ENCODE measurements at regions of chr12 and their contacts with region 1.

Region 1: GRCh38 chr12:77010691-77011548 is 54.4 kb downstream of the E2F7 start:
- DNase-seq: peak; percentile 52 to 86 (median 60)
- ATAC-seq: peak in 3 of 4 donors; percentile 69 to 84 (median 71)
- H3K4me3 ChIP-seq: peak overlapping the region in 2 of 12 donors; percentile 5 to 36
- H3K27ac ChIP-seq: no peak overlapping the region
- H3K4me1 ChIP-seq: peaks cover 0 to 5% (median 0%) of the 10 kb centered on the region in 12 donors
- H3K27me3 ChIP-seq: no peaks in the 10 kb centered on the region
- CTCF ChIP-seq: peak; percentile 87 to 97 (median 94)
- POLR2A ChIP-seq: no peak

Region 2: GRCh38 chr12:76621582-76622024 is 389.3 kb before region 1 on chr12:
- intact Hi-C with region 1: loop called (anchors 1 to 5 kb)
- DNase-seq: peak in 4 of 5 donors; percentile 48 to 62 (median 57)
- ATAC-seq: peak in 3 of 4 donors; percentile 75 to 84 (median 83)
- H3K4me3 ChIP-seq: no peak overlapping the region
- H3K27ac ChIP-seq: no peak overlapping the region
- H3K4me1 ChIP-seq: peaks cover 0 to 7% (median 4%) of the 10 kb centered on the region in 12 donors
- H3K27me3 ChIP-seq: no peaks in the 10 kb centered on the region
- CTCF ChIP-seq: peak; percentile 88 to 98 (median 94)
- POLR2A ChIP-seq: no peak

Region 3: GRCh38 chr12:76636121-76636692 is 374.7 kb before region 1 on chr12:
- intact Hi-C with region 1: loop called in 1 of 10 experiments (anchors 5 kb)
- DNase-seq: no peak
- ATAC-seq: no peak
- H3K4me3 ChIP-seq: no peak overlapping the region
- H3K27ac ChIP-seq: no peak overlapping the region
- H3K4me1 ChIP-seq: peaks cover 0 to 15% (median 0%) of the 10 kb centered on the region in 12 donors
- H3K27me3 ChIP-seq: no peaks in the 10 kb centered on the region
- CTCF ChIP-seq: no peak
- POLR2A ChIP-seq: no peak

Region 4: DNA sequence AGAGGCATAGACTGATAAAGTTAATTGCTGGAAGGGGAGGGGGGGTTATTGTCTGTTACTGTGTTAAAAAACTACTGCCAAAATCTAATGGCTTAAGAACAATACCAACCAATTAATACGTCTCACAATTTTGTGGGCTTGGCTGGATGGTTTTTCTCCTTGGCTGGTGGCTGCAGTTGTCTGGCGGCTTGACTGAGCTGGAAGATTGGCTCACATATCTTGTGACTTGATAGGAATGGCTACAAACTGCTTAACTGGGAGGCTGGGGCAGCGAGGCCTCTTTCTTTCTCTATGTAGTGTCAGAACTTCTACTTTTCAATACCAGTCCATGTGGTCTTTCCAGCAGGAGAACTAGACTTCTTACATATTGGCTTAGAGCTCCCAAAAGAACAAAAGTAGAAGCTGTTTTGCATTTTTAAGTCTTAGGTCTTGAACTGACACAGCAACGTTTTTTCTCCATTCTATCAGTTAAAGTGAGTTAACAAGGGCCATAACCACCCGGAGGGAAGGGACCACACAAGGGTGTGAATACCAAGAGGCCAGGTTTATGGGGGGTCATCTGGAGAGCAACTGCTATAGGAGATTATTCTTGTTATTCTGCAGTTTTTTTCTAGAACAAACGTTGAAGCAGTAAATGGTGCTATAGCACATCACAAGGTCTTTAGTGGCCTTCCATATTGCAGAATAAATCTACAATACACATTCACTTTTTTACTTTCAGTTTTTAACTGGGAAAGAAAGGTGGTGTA is 200.1 kb before region 1 on chr12:
- intact Hi-C with region 1: loop called in 1 of 10 experiments (anchors 5 kb)
- DNase-seq: no peak
- ATAC-seq: peak in 2 of 4 donors; percentile 57 to 61
- H3K4me3 ChIP-seq: no peak overlapping the region
- H3K27ac ChIP-seq: peak overlapping the region in 1 of 12 donors; percentile 13
- H3K4me1 ChIP-seq: peaks cover 0 to 9% (median 0%) of the 10 kb centered on the region in 12 donors
- H3K27me3 ChIP-seq: no peaks in the 10 kb centered on the region
- CTCF ChIP-seq: no peak
- POLR2A ChIP-seq: no peak

Region 5: GRCh38 chr12:76820888-76821482 is 189.9 kb before region 1 on chr12:
- intact Hi-C with region 1: loop called in 2 of 10 experiments (anchors 10 kb)
- DNase-seq: peak in 1 of 5 donors; percentile 13
- ATAC-seq: peak in 3 of 4 donors; percentile 41 to 67 (median 48)
- H3K4me3 ChIP-seq: no peak overlapping the region
- H3K27ac ChIP-seq: no peak overlapping the region
- H3K4me1 ChIP-seq: peaks cover 0 to 7% (median 0%) of the 10 kb centered on the region in 12 donors
- H3K27me3 ChIP-seq: no peaks in the 10 kb centered on the region
- CTCF ChIP-seq: peak; percentile 22 to 70 (median 52)
- POLR2A ChIP-seq: no peak

Region 6: GRCh38 chr12:76848132-76848531 is 162.8 kb before region 1 on chr12:
- intact Hi-C with region 1: loop called in 1 of 10 experiments (anchors 10 kb)
- DNase-seq: no peak
- ATAC-seq: no peak
- H3K4me3 ChIP-seq: no peak overlapping the region
- H3K27ac ChIP-seq: no peak overlapping the region
- H3K4me1 ChIP-seq: no peaks in the 10 kb centered on the region
- H3K27me3 ChIP-seq: no peaks in the 10 kb centered on the region
- CTCF ChIP-seq: no peak
- POLR2A ChIP-seq: no peak

Region 7: DNA sequence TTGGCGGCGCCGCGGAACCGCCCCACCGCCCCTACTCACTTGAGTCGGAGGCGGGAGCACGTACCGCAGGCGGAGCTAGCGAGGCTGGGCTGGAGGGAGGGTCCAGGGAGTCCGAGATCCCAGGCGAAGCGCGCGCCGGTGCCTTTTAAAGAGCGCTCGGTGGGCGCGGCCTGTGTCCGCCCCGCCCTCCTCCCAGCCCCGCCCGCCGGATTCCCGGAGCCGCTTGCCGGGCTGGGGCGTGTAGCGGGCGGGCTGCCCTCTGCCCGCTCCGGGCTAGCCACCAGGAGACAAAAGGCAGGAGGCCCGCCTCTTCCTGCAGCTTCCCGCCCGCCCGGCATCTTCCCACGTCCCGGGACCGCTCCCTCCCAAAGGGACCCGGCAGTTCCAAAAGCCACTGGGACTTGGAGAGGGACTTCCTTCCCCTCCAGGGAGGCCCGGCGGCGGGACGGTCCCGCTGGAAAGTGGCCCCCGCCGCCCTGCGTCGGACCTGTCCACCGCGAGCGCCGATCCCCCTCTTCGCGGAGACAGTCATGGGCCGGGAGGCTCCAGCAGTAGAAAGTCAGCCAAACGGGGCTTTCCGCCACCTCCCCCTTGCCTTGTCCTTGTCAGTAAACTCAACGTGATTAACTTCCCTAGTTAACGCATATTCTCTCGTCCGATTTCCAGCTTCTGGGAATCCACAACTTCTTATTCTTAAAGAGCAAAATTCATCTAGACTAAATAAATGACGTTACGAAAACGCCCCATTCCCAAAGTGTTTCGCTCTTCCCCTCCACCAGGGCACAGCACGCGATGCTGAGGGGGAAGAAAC is 131.8 kb before region 1 on chr12 and contains the start of gene CSRP2:
- intact Hi-C with region 1: loop called in 1 of 10 experiments (anchors 5 kb)
- DNase-seq: peak; percentile 90 to 94 (median 93)
- ATAC-seq: peak; percentile 92 to 97 (median 96)
- H3K4me3 ChIP-seq: peak within 1 kb of the TSS; percentile 57 to 92 (median 70)
- H3K27ac ChIP-seq: peak within 1 kb of the TSS; percentile 48 to 94 (median 90)
- H3K4me1 ChIP-seq: peaks cover 0 to 34% (median 14%) of the 10 kb centered on the region in 12 donors
- H3K27me3 ChIP-seq: peaks cover 0 to 21% (median 0%) of the 10 kb centered on the region in 9 donors
- CTCF ChIP-seq: peak in 6 of 12 donors; percentile 11 to 35 (median 30)
- POLR2A ChIP-seq: peak in 1 of 2 donors; percentile 96
- total RNA-seq, gene CSRP2: 16.2 to 36.7 (median 24.0) TPM

Region 8: DNA sequence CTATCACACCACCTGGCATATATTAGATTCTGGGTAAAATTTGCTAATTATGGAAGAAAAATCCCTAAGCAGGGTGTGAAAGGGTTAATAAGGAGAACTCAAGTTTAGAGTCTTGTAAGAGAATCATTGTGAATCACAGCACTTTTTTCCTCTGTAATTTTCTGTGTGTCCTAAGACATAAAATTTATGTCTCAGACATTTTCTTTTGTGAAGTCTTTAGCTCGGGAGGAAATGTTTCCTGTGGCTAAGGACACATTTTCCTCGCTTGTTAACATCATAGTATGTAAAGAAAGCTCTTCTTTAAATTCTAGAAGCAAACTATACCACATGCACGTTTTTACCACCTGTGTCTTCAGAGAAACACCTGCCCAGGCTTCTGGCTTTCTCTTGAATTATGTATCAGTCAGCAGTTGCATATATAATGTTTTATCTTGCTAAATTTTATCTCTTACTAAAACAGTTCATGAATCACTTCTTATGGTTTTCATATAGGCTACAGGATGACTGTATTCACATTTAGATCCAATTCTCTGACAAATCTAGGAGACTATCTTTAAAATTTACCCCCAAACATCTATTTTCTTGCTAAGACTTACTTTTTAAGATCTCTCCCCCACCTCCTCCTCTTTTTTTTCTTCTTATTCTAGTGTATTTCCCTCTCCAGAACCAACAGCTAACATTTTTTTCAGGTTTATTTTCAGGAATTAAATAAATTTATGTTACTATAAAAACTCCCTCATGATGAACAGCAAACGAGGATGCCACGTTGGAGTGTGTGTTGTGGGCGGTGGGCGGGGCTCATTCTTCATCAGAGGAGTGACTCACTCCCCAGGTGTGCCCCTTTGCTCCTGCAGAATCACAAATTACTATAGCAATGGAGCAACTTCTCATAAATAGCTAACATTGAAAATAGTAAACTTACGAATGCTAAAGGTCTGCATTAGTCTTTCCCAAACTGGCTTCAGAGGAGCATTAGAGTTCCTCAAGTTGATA is 120.5 kb before region 1 on chr12:
- intact Hi-C with region 1: no loop called
- DNase-seq: no peak
- ATAC-seq: no peak
- H3K4me3 ChIP-seq: no peak overlapping the region
- H3K27ac ChIP-seq: no peak overlapping the region
- H3K4me1 ChIP-seq: no peaks in the 10 kb centered on the region
- H3K27me3 ChIP-seq: no peaks in the 10 kb centered on the region
- CTCF ChIP-seq: no peak
- POLR2A ChIP-seq: no peak